ENCODE measurements at regions of chrX and their contacts with region 1.

Region 1: DNA sequence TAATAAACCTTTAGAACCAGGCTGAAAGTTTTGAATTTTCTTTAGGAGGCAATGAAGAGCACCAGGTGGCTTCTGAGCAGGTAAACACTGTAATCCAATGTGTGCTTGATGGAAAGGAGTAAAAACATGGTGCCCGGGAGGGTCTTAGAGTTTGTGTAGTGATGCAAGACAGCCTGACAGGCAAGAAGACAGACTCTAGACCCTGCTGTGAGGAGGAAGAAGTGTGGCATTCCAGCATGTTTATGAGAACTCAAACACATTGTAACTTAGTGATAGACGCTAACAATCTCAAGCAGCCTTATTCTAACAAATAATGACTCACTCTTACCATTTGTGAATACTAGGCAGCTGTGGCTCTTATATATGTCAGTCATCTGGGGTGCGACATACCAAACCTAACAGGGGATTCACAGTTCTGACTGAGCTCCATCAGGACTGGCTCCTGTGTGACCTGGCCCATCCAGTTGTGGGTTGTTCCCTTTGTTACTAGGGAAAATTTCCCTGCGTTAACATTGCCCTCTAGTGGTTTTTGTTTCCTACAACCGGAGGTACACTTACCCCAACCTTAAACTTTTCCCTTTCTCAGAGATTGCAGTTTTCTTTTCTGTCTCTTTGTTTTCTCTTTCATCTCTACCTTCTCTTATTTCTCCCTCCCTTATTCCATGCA is 53.8 kb downstream of the VSIG4 start:
- DNase-seq: no peak
- ATAC-seq: peak; percentile 92
- H3K4me3 Mint-ChIP-seq: no peak overlapping the region
- H3K27ac Mint-ChIP-seq: peak overlapping the region; percentile 74
- H3K4me1 Mint-ChIP-seq: peaks cover 43% of the 10 kb centered on the region
- H3K27me3 Mint-ChIP-seq: no peaks in the 10 kb centered on the region
- CTCF ChIP-seq: no peak

Region 2: DNA sequence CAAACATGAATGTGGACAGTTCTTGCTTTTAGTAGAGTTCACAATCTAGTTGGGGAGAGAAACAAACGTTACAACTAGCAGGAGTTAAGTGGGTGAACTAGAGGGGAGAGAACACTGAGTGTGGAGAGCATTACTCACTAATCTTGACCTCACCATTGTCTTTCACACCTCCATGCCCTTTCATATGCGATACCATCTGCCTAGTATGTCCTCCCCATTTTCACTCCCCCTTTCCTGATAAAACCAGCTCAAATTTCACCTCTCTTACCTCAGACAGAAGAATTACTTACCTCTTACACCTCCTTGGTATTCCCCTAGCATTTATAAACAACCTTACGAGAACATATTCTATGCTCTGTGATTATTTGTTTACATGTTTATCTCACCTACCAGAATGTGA is 505.1 kb before region 1 on chrX:
- CTCF ChIA-PET with region 1: no interaction called
- POLR2A ChIA-PET with region 1: no interaction called
- intact Hi-C with region 1: no loop called
- DNase-seq: no peak
- ATAC-seq: no peak
- H3K4me3 Mint-ChIP-seq: no peak overlapping the region
- H3K27ac Mint-ChIP-seq: no peak overlapping the region
- H3K4me1 Mint-ChIP-seq: no peaks in the 10 kb centered on the region
- H3K27me3 Mint-ChIP-seq: no peaks in the 10 kb centered on the region
- CTCF ChIP-seq: no peak

Region 3: GRCh38 chrX:65581661-65582339 is 404.3 kb before region 1 on chrX:
- CTCF ChIA-PET with region 1: interaction called, 11 read pairs
- POLR2A ChIA-PET with region 1: no interaction called
- intact Hi-C with region 1: loop called (anchors 1 kb)
- DNase-seq: no peak
- ATAC-seq: peak; percentile 67
- H3K4me3 Mint-ChIP-seq: no peak overlapping the region
- H3K27ac Mint-ChIP-seq: no peak overlapping the region
- H3K4me1 Mint-ChIP-seq: peaks cover 12% of the 10 kb centered on the region
- H3K27me3 Mint-ChIP-seq: no peaks in the 10 kb centered on the region
- CTCF ChIP-seq: no peak

Region 4: DNA sequence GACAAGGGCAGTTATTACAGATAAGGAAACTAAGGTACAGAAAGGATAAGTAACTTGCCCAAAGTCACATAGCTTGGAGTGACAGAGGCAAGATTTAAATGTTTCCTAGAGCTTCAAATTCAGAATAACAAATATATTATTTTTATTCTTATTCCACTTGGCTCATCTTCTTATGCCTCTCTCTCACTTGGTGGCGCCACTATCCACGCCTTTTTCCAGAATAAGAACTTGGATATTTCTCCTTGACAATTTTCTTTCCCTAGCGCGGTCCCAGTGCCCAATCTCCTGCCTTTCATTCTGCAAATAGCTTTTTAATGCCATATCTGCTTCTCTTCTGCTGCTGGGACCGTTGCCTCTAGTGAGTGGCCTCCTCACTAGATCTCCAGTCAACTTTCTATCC is 240.1 kb before region 1 on chrX:
- CTCF ChIA-PET with region 1: no interaction called
- POLR2A ChIA-PET with region 1: no interaction called
- intact Hi-C with region 1: loop called (anchors 10 kb)
- DNase-seq: no peak
- ATAC-seq: no peak
- H3K4me3 Mint-ChIP-seq: no peak overlapping the region
- H3K27ac Mint-ChIP-seq: peak overlapping the region; percentile 0
- H3K4me1 Mint-ChIP-seq: peaks cover 40% of the 10 kb centered on the region
- H3K27me3 Mint-ChIP-seq: no peaks in the 10 kb centered on the region
- CTCF ChIP-seq: no peak

Region 5: DNA sequence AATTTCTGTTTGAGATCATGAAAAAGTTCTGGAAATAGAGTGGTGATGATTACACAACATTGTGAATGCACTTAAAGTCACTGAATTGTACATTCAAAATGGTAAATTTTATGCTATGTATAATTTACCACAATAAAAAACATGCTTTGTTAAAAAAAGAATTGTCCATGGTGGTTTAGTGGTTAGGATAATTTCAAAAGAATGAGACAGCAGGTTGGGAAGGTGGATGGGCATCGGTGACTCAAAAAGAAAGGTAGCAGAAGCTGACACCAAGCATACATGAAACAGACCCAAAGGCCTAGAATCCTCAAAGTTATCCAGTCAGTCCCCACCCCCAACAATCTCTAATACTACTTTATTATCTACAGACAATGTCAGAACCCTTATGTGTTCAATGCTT is 227.6 kb before region 1 on chrX:
- CTCF ChIA-PET with region 1: no interaction called
- POLR2A ChIA-PET with region 1: no interaction called
- intact Hi-C with region 1: no loop called
- DNase-seq: no peak
- ATAC-seq: no peak
- H3K4me3 Mint-ChIP-seq: no peak overlapping the region
- H3K27ac Mint-ChIP-seq: no peak overlapping the region
- H3K4me1 Mint-ChIP-seq: no peaks in the 10 kb centered on the region
- H3K27me3 Mint-ChIP-seq: no peaks in the 10 kb centered on the region
- CTCF ChIP-seq: no peak

Region 6: GRCh38 chrX:65811558-65812228 is 174.4 kb before region 1 on chrX:
- CTCF ChIA-PET with region 1: no interaction called
- POLR2A ChIA-PET with region 1: no interaction called
- intact Hi-C with region 1: no loop called
- DNase-seq: no peak
- ATAC-seq: no peak
- H3K4me3 Mint-ChIP-seq: no peak overlapping the region
- H3K27ac Mint-ChIP-seq: no peak overlapping the region
- H3K4me1 Mint-ChIP-seq: no peaks in the 10 kb centered on the region
- H3K27me3 Mint-ChIP-seq: no peaks in the 10 kb centered on the region
- CTCF ChIP-seq: no peak

Region 7: DNA sequence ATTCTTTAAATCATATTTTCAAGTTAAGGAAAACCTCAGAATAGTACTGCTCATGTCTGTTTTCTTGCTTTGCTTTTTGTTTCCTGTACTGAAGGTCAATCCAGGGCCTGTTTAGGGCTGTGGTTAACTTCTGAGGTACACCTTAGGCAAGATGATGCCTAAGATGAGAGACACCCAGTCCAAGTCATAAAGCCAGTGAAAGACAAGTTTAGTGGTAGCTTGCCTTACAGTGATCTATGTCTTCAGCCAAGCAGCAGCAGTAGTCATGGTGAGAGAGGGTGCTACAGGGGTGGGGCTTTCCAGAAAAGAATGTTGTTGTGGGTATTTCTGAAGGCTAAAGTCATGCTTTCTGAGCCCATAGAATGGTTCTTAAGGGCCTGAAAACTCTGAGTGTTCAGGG is 119.9 kb before region 1 on chrX:
- CTCF ChIA-PET with region 1: no interaction called
- POLR2A ChIA-PET with region 1: no interaction called
- intact Hi-C with region 1: loop called (anchors 5 kb)
- DNase-seq: no peak
- ATAC-seq: peak; percentile 70
- H3K4me3 Mint-ChIP-seq: no peak overlapping the region
- H3K27ac Mint-ChIP-seq: peak overlapping the region; percentile 53
- H3K4me1 Mint-ChIP-seq: peaks cover 13% of the 10 kb centered on the region
- H3K27me3 Mint-ChIP-seq: no peaks in the 10 kb centered on the region
- CTCF ChIP-seq: no peak

Region 8: DNA sequence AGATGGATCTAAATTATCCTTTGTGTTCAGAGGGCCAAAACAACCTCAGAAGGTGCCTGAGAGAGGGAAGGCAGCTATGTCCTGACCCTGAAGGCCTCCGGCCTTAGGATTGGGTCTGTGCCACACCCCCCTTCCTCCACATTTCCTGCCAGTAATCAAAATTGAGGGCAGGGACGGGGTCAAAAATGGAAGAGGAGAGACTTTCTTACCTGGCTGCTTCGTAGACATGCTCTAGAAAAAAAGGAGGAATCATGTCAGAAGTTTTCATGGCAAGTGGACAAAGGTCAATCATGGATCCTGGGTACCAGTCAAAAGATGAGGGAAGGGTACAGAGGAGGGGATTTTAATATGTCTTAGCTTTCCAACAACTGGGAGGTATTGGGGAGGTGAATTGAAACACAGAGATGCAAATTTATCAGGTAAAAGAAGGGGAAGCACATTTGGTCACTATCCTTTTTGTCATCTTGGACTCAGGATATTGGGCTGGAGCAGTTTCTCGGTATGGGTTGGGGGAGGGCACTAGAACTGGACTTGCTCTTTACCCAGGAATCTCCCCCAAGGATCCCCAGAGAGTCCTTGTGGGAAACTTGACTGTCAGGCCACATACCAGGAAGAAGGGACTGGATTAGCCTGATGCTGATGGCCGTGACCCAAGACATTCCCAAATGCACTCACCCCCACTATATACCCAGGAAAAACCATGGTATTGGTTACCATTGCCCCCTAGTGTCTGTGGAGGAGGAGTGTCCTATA is 36.8 kb after region 1 on chrX:
- CTCF ChIA-PET with region 1: interaction called, 5 read pairs
- POLR2A ChIA-PET with region 1: no interaction called
- intact Hi-C with region 1: loop called (anchors 5 kb)
- DNase-seq: no peak
- ATAC-seq: peak; percentile 29
- H3K4me3 Mint-ChIP-seq: no peak overlapping the region
- H3K27ac Mint-ChIP-seq: peak overlapping the region; percentile 81
- H3K4me1 Mint-ChIP-seq: peaks cover 77% of the 10 kb centered on the region
- H3K27me3 Mint-ChIP-seq: no peaks in the 10 kb centered on the region
- CTCF ChIP-seq: no peak

Region 9: DNA sequence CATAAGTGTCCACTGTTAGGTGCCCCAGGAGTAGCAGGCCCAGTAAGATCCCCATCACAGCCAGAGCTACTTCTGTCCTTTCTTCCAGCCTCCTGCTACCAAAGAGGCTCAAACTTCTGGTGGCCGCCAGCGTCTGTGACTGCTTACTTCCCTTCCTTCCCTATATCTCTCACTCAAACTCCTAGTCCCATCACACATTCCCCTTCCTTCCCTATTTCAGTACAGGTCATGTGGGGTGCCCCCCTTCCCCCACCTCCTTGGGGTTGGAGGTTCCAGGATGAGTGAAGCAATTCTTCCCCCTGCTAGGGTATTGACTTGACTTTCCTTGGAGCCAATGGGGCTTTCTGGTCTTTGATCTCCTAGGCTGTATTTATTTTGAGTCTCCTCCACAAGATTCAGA is 53.9 kb after region 1 on chrX and contains the start of gene VSIG4:
- CTCF ChIA-PET with region 1: no interaction called
- POLR2A ChIA-PET with region 1: no interaction called
- intact Hi-C with region 1: no loop called
- DNase-seq: no peak
- ATAC-seq: no peak
- H3K4me3 Mint-ChIP-seq: no peak within 1 kb of the TSS
- H3K27ac Mint-ChIP-seq: no peak within 1 kb of the TSS
- H3K4me1 Mint-ChIP-seq: peaks cover 2% of the 10 kb centered on the region
- H3K27me3 Mint-ChIP-seq: no peaks in the 10 kb centered on the region
- CTCF ChIP-seq: no peak
- total RNA-seq, gene VSIG4: not detected in 2 replicates

Region 10: DNA sequence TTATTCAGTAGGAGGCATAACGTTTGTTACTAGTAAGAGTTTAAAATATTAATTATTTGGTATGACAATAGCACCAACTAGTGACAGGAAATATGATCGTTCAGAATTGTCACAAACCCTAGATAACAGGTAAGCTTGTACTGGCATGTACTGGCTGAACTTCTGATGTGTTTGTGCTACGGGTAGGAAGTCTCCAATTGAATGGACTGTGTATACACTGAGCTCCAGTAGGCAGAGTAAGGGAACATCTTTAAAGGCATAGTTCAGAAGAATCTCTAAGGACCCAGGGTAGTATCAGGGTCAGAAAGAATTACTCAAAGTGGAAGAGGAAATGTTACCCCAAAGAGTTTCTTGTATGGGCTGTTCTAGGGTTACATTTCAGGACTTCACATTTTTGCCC is 422.5 kb after region 1 on chrX:
- CTCF ChIA-PET with region 1: no interaction called
- POLR2A ChIA-PET with region 1: no interaction called
- intact Hi-C with region 1: loop called (anchors 10 kb)
- DNase-seq: no peak
- ATAC-seq: no peak
- H3K4me3 Mint-ChIP-seq: no peak overlapping the region
- H3K27ac Mint-ChIP-seq: no peak overlapping the region
- H3K4me1 Mint-ChIP-seq: no peaks in the 10 kb centered on the region
- H3K27me3 Mint-ChIP-seq: no peaks in the 10 kb centered on the region
- CTCF ChIP-seq: no peak

Measured in activated B cell treated with CpG ODN at 0.5 μM for 24 hours (primary cell).